ENCODE measurements at regions of chr6 and their contacts with region 1.

Region 1: DNA sequence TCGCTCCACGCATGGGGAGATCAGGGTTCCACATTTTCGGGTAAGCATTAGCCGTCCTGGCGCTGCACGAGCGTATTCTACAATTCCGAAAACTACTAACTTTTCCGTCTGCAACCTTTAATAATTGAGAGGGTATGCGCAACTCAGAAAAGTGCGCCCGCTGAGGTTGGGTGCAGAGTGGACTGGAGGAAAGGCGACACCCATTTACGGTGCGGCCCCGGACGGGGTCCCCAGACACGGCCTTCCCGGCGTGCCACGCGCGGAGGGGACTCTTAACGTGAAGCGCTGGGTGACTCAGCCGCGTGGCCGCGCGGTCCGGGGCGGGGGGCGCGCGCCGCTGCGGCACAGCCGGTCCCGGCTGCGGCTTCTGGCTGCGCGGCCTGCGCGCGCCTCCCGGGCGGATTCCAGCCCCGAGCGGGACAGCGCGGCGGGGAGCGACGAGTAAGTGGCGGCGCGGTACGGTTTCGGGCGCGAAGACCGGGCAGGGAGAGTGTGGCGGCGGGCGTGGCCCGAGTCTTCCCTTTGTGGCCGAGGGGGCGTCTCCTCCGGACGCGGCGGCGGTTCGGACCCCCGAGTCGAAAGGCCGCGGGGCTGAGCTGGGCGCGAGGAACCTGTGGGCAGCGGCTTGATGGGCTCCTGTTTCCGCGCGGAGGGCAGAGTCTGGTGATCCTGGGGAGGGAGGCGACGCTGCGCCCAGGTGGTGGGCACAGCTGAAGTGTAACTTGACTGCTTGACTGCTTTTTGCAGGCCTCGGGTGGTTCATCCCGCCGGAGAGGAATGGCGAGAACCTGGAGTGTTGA is at the starts of genes KCTD20 and PXT1:
- DNase-seq: peak; percentile 90 to 93
- H3K4me3 ChIP-seq: peak within 1 kb of the TSS; percentile 82
- H3K4me3 Mint-ChIP-seq: peak within 1 kb of the TSS; percentile 86
- H3K27ac Mint-ChIP-seq: peak within 1 kb of the TSS; percentile 96
- H3K4me1 ChIP-seq: peaks cover 32% of the 10 kb centered on the region
- H3K4me1 Mint-ChIP-seq: peaks cover 8% of the 10 kb centered on the region
- H3K27me3 ChIP-seq: no peaks in the 10 kb centered on the region
- H3K27me3 Mint-ChIP-seq: no peaks in the 10 kb centered on the region
- CTCF ChIP-seq: no peak
- total RNA-seq, gene KCTD20: 28.1 and 32.4 TPM in 2 replicates
- total RNA-seq, gene PXT1: not detected in 2 replicates

Region 2: GRCh38 chr6:36123257-36124139 is 319.4 kb before region 1 on chr6:
- CTCF ChIA-PET with region 1: no interaction called
- POLR2A ChIA-PET with region 1: no interaction called
- intact Hi-C with region 1: no loop called
- DNase-seq: peak; percentile 76 to 84
- H3K4me3 ChIP-seq: no peak overlapping the region
- H3K4me3 Mint-ChIP-seq: no peak overlapping the region
- H3K27ac Mint-ChIP-seq: peak overlapping the region; percentile 53
- H3K4me1 ChIP-seq: peaks cover 18% of the 10 kb centered on the region
- H3K4me1 Mint-ChIP-seq: peaks cover 7% of the 10 kb centered on the region
- H3K27me3 ChIP-seq: no peaks in the 10 kb centered on the region
- H3K27me3 Mint-ChIP-seq: no peaks in the 10 kb centered on the region
- CTCF ChIP-seq: peak; percentile 59 to 83

Region 3: GRCh38 chr6:36368921-36369865 is 73.7 kb before region 1 on chr6:
- CTCF ChIA-PET with region 1: no interaction called
- POLR2A ChIA-PET with region 1: no interaction called
- intact Hi-C with region 1: no loop called
- DNase-seq: no peak
- H3K4me3 ChIP-seq: no peak overlapping the region
- H3K4me3 Mint-ChIP-seq: no peak overlapping the region
- H3K27ac Mint-ChIP-seq: no peak overlapping the region
- H3K4me1 ChIP-seq: peaks cover 10% of the 10 kb centered on the region; the same call in 1 of the 2 replicates
- H3K4me1 Mint-ChIP-seq: peaks cover 7% of the 10 kb centered on the region
- H3K27me3 ChIP-seq: no peaks in the 10 kb centered on the region
- H3K27me3 Mint-ChIP-seq: peaks cover 5% of the 10 kb centered on the region
- CTCF ChIP-seq: no peak

Region 4: DNA sequence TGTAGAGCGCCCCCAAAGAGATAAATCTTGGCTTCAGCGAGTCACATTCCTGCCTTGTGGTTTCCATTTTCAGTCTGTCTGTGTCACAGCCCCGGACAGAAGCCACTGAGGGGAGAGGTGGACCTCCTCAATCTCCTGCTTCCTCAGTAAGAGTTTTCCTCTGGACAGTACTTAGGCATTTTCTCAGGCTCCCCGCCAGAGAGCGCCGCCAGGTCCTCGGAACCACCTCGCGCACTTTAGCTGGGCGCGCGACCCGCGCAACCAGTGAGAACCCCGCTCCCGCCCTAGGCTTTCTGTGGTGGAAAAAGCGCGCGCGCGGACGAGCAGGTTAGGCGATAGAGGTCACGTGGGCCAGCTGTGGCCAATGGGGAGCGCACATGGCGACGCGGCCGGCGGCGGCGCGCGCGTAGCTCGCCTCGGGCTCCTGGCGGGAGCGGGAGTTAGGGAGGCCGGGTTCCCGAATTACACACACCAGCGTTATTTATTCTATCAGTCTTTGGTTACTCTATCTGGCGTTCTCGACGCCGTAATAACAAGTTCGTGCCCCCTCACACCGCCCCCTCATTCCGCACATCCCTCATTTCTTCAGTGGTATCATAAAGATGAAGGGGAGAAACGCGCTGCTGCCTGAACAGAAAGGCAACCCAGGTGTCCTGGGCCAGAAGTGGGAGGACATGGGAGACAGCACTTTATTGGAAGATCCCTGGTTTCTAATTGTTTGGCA is 19.6 kb before region 1 on chr6:
- CTCF ChIA-PET with region 1: interaction called, 6 read pairs
- POLR2A ChIA-PET with region 1: interaction called, 16 read pairs
- intact Hi-C with region 1: loop called (anchors 1 kb)
- DNase-seq: peak; percentile 99
- H3K4me3 ChIP-seq: peak overlapping the region; percentile 58
- H3K4me3 Mint-ChIP-seq: peak overlapping the region; percentile 81
- H3K27ac Mint-ChIP-seq: peak overlapping the region; percentile 82
- H3K4me1 ChIP-seq: peaks cover 22% of the 10 kb centered on the region
- H3K4me1 Mint-ChIP-seq: peaks cover 15% of the 10 kb centered on the region
- H3K27me3 ChIP-seq: no peaks in the 10 kb centered on the region
- H3K27me3 Mint-ChIP-seq: no peaks in the 10 kb centered on the region
- CTCF ChIP-seq: peak; percentile 56 to 76

Region 5: GRCh38 chr6:36430351-36430750 is 12.5 kb before region 1 on chr6:
- CTCF ChIA-PET with region 1: no interaction called
- POLR2A ChIA-PET with region 1: interaction called, 11 read pairs
- intact Hi-C with region 1: loop called (anchors 1 kb)
- DNase-seq: peak; percentile 66 to 73
- H3K4me3 ChIP-seq: no peak overlapping the region
- H3K4me3 Mint-ChIP-seq: peak overlapping the region; percentile 39
- H3K27ac Mint-ChIP-seq: peak overlapping the region; percentile 83
- H3K4me1 ChIP-seq: peaks cover 49% of the 10 kb centered on the region
- H3K4me1 Mint-ChIP-seq: peaks cover 25% of the 10 kb centered on the region
- H3K27me3 ChIP-seq: no peaks in the 10 kb centered on the region
- H3K27me3 Mint-ChIP-seq: no peaks in the 10 kb centered on the region
- CTCF ChIP-seq: no peak

Region 6: DNA sequence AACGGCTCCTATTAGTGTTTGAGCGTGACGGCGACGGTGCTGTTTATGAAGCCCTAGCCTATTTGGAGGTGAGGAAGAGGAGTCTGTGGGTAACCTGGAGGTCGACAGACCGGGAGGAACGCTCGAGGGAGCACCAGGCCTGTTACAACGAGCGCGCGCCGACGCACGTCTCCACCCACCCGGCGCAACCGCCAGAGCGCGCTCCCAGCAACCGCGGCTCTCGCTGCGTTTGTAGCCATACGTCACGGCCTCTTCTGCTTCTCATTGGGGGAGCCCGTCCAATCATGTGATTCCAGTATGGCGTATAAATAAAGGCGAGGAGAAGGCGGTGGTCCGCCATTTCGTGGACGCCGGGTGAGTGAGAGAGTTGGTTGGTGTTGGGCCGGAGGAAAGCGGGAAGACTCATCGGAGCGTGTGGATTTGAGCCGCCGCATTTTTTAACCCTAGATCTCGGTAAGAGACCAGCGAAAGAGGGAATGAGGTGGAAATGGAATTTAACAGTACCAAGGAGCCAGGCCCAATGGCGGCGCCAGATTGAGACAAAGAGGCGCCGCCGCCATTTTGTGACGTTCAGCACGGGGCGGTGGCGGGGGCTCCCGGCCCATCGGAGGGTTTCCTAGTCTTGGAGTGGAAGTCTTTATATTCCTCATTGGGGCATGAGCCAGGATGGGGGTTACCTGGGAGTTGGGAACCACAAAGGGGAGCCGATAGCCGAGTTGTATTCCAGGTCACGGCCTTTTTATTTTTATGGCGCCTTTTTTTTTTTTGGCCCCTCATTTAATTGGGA is 151.4 kb after region 1 on chr6 and contains the start of gene SRSF3:
- CTCF ChIA-PET with region 1: no interaction called
- POLR2A ChIA-PET with region 1: no interaction called
- intact Hi-C with region 1: loop called (anchors 5 kb)
- DNase-seq: peak; percentile 97
- H3K4me3 ChIP-seq: peak within 1 kb of the TSS; percentile 53
- H3K4me3 Mint-ChIP-seq: peak within 1 kb of the TSS; percentile 81
- H3K27ac Mint-ChIP-seq: peak within 1 kb of the TSS; percentile 97
- H3K4me1 ChIP-seq: peaks cover 16% of the 10 kb centered on the region
- H3K4me1 Mint-ChIP-seq: peaks cover 7% of the 10 kb centered on the region
- H3K27me3 ChIP-seq: no peaks in the 10 kb centered on the region
- H3K27me3 Mint-ChIP-seq: peaks cover 3% of the 10 kb centered on the region
- CTCF ChIP-seq: peak; percentile 40 to 51
- total RNA-seq, gene SRSF3: 422 and 425 TPM in 2 replicates

Measured in Caco-2 (cell line).